ENCODE measurements at regions of chr11 and their contacts with region 1.

Region 1: GRCh38 chr11:68903288-68904247 is at the starts of genes IGHMBP2 and MRPL21:
- DNase-seq: peak; percentile 82
- H3K4me3 Mint-ChIP-seq: peak within 1 kb of the TSS; percentile 99
- H3K27ac Mint-ChIP-seq: peak within 1 kb of the TSS; percentile 93
- H3K4me1 Mint-ChIP-seq: peaks cover 31% of the 10 kb centered on the region
- H3K27me3 Mint-ChIP-seq: no peaks in the 10 kb centered on the region
- total RNA-seq, gene IGHMBP2: 31.3 and 31.6 TPM in 2 replicates
- total RNA-seq, gene MRPL21: 104 and 106 TPM in 2 replicates

Region 2: DNA sequence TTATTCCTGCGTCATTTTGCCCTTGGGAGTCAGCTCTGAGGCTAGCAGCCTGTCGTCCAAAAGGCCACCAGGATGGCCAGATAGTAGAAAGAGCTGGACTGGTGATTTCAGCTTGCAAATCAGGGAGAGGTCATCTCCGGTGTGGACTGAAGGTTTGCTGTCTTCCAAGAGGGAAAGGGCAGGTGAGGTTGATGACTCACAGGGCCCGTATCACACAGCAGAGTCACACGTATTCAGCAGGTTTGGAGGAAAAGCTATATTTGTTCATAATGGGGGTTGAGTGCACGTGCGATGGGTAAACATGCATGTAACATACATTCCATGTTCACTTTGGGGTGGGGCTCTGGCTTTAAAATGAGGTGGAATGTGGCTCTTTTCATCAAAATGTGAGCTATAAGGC is 25.5 kb before region 1 on chr11:
- intact Hi-C with region 1: no loop called
- DNase-seq: no peak
- H3K4me3 Mint-ChIP-seq: no peak overlapping the region
- H3K27ac Mint-ChIP-seq: no peak overlapping the region
- H3K4me1 Mint-ChIP-seq: no peaks in the 10 kb centered on the region
- H3K27me3 Mint-ChIP-seq: peaks cover 2% of the 10 kb centered on the region

Region 3: DNA sequence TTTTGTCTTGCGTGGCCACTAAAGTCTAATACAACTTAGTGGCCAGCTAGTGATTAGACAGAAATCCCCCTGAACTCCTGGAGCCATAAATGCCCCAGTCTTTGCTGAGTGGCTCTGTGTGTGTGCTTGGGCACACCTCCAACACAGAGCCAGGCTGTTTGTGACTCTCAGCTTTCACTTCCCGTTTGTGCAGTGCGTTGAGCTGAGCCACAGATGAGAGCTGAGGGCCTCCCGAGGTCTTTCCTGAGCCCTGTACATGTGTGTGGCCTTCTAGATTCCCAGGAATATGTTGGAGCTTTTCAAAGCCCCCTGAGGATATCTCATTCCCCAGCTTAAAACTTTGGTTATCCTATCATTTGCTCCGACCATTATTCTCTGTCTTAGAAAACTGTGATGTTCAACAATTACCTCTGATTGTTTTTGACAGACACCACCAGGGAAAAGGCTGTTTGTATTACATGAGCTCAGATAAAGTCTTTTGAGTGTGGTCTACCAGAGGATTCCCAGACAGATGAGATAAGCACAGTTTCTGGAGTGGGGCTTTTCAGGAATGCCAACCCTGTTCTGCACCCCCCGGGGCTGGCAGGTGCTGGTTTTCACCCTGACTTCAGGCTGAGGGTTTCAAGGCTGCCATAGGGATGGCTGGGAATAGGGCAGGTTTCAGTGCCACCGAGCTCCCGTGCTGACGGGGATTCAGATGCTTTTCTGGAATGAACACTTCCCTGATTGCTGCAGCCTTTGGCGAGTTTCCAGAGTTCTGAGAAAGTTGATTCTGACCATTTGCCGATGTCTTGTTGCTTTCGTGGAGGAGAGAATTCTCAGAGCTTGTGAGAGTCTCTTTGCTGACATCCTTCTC is 23.9 kb after region 1 on chr11:
- intact Hi-C with region 1: no loop called
- DNase-seq: no peak
- H3K4me3 Mint-ChIP-seq: no peak overlapping the region
- H3K27ac Mint-ChIP-seq: no peak overlapping the region
- H3K4me1 Mint-ChIP-seq: no peaks in the 10 kb centered on the region
- H3K27me3 Mint-ChIP-seq: no peaks in the 10 kb centered on the region

Region 4: DNA sequence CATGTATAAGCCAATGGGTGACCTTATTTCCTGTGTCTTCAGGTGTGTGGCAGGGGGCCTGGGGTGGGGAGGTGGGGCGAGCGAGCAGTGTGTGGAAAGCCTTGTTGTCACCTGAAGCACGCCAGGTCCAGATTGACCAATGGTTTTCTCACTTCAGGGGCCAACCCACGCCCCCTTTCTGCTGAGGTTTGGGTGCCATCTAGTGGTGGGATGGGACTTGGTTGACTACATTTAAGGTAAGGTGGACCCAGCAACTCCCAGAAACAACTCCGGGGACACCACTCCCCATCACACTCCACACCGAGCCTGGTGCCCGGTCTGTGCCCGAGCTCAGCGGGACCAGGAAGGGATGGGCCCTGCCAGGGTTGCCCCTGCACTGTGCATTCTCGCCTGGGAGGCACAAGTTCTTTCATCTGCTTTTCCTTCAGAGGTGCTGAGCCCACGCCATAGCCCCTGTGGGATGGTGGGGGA is 185.1 kb after region 1 on chr11:
- intact Hi-C with region 1: loop called (anchors 2 kb)
- DNase-seq: peak; percentile 36
- H3K4me3 Mint-ChIP-seq: no peak overlapping the region
- H3K27ac Mint-ChIP-seq: no peak overlapping the region
- H3K4me1 Mint-ChIP-seq: no peaks in the 10 kb centered on the region
- H3K27me3 Mint-ChIP-seq: no peaks in the 10 kb centered on the region